HEK293 (cell line): ENCODE measurements at regions of chr11 and their contacts with region 1.

Region 1: DNA sequence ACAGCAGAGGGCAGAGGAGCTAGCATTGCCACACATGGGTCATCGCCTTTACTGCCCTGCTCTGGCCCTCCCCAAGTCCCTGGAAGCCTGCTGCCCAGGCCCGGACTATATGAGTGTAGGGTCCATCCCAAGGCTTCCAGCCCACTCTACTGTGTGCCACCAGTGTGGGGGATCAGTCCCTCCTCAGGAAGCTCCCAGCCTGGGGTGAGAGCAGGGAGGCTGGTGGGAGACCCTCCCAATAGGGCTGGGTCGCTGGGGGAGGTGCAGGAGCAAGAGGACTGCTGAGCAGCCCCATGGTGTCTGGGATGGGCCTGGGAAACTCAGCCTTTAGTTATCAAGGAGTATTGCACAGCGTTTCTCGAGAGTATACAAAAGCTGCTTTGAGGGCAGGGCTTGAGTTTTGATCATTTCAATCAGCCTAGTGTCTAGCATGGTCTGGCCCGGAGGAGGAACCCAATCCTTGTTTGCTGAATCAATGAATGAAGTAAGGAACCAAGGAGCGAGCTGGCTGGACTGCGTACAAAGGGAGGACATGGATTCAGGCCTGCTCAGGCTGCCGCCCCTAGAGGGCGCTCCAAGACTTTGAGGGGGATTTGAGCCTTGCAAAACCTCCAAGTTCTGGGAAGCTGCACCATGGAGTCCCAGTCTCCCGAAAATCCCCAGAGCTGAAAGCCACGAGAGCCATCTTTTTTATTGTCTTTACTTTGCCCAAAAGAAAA is 89.0 kb upstream of the PARVA start:
- H3K4me3 ChIP-seq: no peak overlapping the region
- H3K27ac ChIP-seq: no peak overlapping the region
- H3K4me1 ChIP-seq: no peaks in the 10 kb centered on the region
- CTCF ChIP-seq: peak; percentile 62; the same call in 1 of the 2 replicates

Region 2: GRCh38 chr11:12066799-12067508 is 221.4 kb before region 1 on chr11:
- CTCF ChIA-PET with region 1: interaction called, 17 read pairs
- POLR2A ChIA-PET with region 1: interaction called, 3 read pairs
- H3K4me3 ChIP-seq: no peak overlapping the region
- H3K27ac ChIP-seq: peak overlapping the region; percentile 28; the same call in 1 of the 2 replicates
- H3K4me1 ChIP-seq: no peaks in the 10 kb centered on the region
- CTCF ChIP-seq: no peak

Region 3: GRCh38 chr11:12306830-12307229 is 18.5 kb after region 1 on chr11:
- CTCF ChIA-PET with region 1: interaction called, 31 read pairs
- POLR2A ChIA-PET with region 1: no interaction called
- H3K4me3 ChIP-seq: no peak overlapping the region
- H3K27ac ChIP-seq: no peak overlapping the region
- H3K4me1 ChIP-seq: no peaks in the 10 kb centered on the region
- CTCF ChIP-seq: no peak

Region 4: GRCh38 chr11:12331239-12331874 is 43.0 kb after region 1 on chr11:
- CTCF ChIA-PET with region 1: interaction called, 45 read pairs
- POLR2A ChIA-PET with region 1: no interaction called
- H3K4me3 ChIP-seq: no peak overlapping the region
- H3K27ac ChIP-seq: no peak overlapping the region
- H3K4me1 ChIP-seq: no peaks in the 10 kb centered on the region
- CTCF ChIP-seq: peak; percentile 55

Region 5: GRCh38 chr11:12397931-12398334 is 109.6 kb after region 1 on chr11:
- CTCF ChIA-PET with region 1: no interaction called
- POLR2A ChIA-PET with region 1: no interaction called
- H3K4me3 ChIP-seq: no peak overlapping the region
- H3K27ac ChIP-seq: no peak overlapping the region
- H3K4me1 ChIP-seq: no peaks in the 10 kb centered on the region
- CTCF ChIP-seq: no peak

Region 6: GRCh38 chr11:12893787-12894672 is 605.7 kb after region 1 on chr11:
- CTCF ChIA-PET with region 1: interaction called, 13 read pairs
- POLR2A ChIA-PET with region 1: no interaction called
- H3K4me3 ChIP-seq: no peak overlapping the region
- H3K27ac ChIP-seq: no peak overlapping the region
- H3K4me1 ChIP-seq: no peaks in the 10 kb centered on the region
- CTCF ChIP-seq: no peak